ENCODE measurements at regions of chr17 and their contacts with region 1.

Region 1: DNA sequence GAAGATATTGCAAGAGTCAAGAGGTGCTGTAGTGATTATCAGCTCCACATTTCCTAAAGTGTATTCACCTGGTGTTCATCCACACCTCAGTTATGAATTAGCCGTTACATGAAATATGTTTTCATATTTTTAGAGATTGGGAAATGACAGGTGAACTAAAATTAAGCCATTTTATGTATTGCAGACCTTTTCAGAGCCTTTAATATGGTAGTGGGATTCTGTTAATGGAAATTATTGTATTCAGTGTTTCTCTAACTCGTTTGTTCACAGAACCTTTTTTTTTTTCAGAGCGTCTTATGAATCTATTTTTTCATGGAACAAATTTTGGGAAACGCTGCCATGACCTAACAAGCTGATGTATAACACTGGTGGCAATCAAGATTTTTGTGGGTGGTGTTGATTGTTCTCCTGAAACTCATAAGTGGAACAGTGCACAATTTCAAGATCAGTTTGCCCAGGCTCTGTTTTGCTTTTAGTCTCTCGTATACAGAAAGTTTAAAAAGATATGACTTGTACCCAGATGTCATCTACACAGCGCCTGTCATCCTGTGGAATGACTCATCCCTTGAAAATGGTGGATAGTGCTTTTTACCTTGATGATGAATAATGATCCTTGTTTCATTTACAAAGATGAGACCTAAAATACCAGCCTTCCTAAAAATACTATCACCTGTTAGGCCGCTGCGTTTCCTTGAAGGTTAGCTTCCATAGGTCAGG is 88.8 kb downstream of the ARHGAP44 start:
- DNase-seq: no peak
- ATAC-seq: no peak
- H3K4me3 ChIP-seq: no peak overlapping the region
- H3K27ac ChIP-seq: no peak overlapping the region
- H3K4me1 ChIP-seq: no peaks in the 10 kb centered on the region
- H3K27me3 ChIP-seq: no peaks in the 10 kb centered on the region
- CTCF ChIP-seq: no peak
- POLR2A ChIP-seq: no peak

Region 2: GRCh38 chr17:12815642-12816141 is 62.4 kb before region 1 on chr17:
- in situ Hi-C with region 1: loop called in 1 of 4 experiments (anchors 10 kb)
- intact Hi-C with region 1: no loop called
- DNase-seq: no peak
- ATAC-seq: no peak
- H3K4me3 ChIP-seq: no peak overlapping the region
- H3K27ac ChIP-seq: no peak overlapping the region
- H3K4me1 ChIP-seq: no peaks in the 10 kb centered on the region
- H3K27me3 ChIP-seq: no peaks in the 10 kb centered on the region
- CTCF ChIP-seq: no peak
- POLR2A ChIP-seq: no peak

Measured in gastrocnemius medialis (tissue), 4 donors.